ENCODE measurements at regions of chr7 and their contacts with region 1.

Region 1: DNA sequence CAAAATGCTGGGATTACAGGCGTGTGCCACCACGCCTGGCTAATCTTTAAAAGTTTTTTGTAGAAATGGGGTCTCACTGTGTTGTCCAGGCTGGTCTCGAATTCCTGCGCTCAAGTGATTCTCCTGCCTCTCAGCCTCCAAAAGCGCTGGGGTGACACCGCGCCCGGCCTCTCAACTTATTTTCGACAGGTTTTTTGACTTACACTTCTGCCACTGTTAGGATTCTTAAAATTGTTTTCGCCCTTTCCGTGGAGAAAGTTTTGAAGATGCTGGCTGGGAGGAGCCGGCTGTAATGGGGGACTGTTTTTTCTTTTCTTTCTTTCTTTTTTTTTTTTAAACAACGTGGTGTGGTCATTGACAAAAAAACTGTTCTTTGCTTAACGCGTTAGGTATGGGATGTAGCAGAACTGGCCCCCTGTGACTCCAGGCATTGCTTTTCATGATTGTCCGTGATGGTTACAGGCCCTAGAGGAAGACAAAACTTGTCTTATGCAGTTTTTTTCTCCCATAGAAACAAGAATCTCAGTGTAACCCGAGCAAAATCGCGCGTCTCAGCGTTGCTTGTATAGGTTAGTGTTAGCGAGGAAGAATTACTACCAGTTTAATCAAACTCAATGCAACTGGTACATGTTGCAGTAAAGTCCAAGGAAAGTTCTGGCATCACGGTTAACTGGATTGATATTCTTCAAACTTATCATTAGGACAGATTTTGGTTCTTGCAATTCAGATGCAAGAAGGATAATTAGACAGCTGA is 72.2 kb downstream of the DAGLB start:
- DNase-seq: no peak
- ATAC-seq: no peak

Region 2: GRCh38 chr7:6392706-6393666 is 17.5 kb after region 1 on chr7:
- intact Hi-C with region 1: loop called (anchors 2 kb)
- DNase-seq: peak; percentile 72
- ATAC-seq: peak; percentile 76

Measured in Right ventricle myocardium inferior (tissue), 1 donor.